ENCODE measurements at regions of chr6 and their contacts with region 1.

Region 1: DNA sequence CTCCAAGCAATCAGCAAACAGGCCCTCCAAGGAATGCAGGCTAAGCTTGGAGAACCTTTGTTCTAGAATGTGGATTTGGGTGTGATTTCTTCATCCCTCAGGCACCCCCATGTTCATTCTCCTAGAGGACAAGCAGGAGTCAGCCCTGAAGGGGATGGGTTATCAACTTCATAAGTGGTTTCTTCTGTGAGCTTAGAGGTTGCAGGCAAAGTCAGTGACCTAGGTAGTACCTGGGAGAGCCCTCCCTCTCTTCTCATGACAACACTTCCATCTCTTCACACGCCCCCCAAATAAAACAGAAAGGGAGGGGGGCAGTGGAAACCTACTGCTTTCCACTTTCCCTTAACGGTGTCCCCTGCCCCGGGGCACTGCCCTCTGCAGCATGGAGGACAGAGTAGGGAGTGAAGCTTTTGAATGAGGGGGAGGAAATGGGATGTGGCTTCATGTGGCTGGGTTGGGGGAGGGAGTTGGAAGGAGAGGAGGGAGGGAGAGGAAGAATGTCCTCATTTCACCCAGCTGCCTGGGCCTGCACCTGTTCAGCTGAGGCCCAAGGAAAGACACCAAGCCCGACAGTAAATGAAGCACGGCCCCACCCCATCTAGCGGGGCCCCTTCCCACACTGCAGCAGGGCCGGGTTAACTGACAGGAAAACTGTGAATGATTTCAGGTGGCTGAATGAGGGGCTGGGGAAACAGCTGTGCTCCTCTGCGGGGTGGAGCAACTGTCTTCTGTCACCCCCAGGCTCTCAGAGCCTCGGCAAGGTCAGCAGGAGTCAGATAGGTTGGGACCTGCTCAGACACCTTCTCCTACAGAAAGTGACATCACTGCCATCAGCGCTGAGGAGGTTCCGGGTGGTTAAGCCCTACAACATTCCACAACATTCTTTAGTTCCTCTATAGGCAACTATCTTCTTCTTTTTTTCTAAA is 40.1 kb upstream of the TAF8 start:
- DNase-seq: no peak
- ATAC-seq: peak; percentile 26
- H3K4me3 ChIP-seq: no peak overlapping the region
- H3K4me3 Mint-ChIP-seq: peak overlapping the region; percentile 45
- H3K27ac ChIP-seq: peak overlapping the region in 1 of 2 donors; percentile 71
- H3K27ac Mint-ChIP-seq: peak overlapping the region; percentile 84
- H3K4me1 ChIP-seq: peaks cover 40 to 50% of the 10 kb centered on the region in 2 donors
- H3K4me1 Mint-ChIP-seq: peaks cover 58% of the 10 kb centered on the region
- H3K27me3 ChIP-seq: no peaks in the 10 kb centered on the region
- H3K27me3 Mint-ChIP-seq: no peaks in the 10 kb centered on the region
- CTCF ChIP-seq: no peak

Region 2: GRCh38 chr6:42028234-42029061 is 18.2 kb after region 1 on chr6:
- CTCF ChIA-PET with region 1: interaction called, 4 read pairs
- POLR2A ChIA-PET with region 1: interaction called, 11 read pairs
- intact Hi-C with region 1: loop called (anchors 2 kb)
- DNase-seq: peak; percentile 29
- ATAC-seq: no peak
- H3K4me3 ChIP-seq: peak overlapping the region in 1 of 5 experiments; percentile 6
- H3K4me3 Mint-ChIP-seq: peak overlapping the region; percentile 69
- H3K27ac ChIP-seq: peak overlapping the region; percentile 57 to 93
- H3K27ac Mint-ChIP-seq: peak overlapping the region; percentile 95
- H3K4me1 ChIP-seq: peaks cover 75 to 95% of the 10 kb centered on the region in 2 donors
- H3K4me1 Mint-ChIP-seq: peaks cover 83% of the 10 kb centered on the region
- H3K27me3 ChIP-seq: no peaks in the 10 kb centered on the region
- H3K27me3 Mint-ChIP-seq: no peaks in the 10 kb centered on the region
- CTCF ChIP-seq: no peak

Region 3: DNA sequence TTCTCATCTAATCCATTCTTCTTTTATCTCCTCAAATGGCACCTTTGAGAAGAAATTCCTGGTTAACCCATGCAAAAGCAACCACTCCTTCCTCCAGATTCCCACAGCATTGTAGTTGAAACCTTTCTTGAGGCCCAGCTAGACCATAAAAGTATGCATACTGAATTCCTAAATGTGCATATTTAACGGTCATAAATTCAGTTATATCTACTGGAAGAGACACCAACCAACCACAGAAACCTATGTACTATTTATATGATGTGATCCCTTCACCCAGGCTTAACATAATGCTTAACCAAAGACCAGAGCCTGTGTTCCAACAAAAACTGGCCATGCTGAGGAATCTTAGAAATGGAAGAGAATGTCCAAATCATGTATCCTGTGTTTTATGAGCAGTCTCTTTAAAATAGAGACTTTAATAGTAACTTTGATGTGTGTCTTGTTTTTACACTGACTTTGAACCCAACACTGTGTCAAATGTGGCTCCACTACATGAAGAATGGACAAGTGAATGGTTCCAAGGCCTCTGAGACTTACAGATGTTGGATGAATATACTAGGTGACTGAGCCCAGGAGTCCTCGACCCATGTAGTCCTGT is 28.7 kb after region 1 on chr6:
- CTCF ChIA-PET with region 1: interaction called, 8 read pairs
- POLR2A ChIA-PET with region 1: interaction called, 3 read pairs
- intact Hi-C with region 1: loop called (anchors 1 kb)
- DNase-seq: no peak
- ATAC-seq: no peak
- H3K4me3 ChIP-seq: peak overlapping the region in 3 of 5 experiments; percentile 23 to 35 (median 30)
- H3K4me3 Mint-ChIP-seq: peak overlapping the region; percentile 74
- H3K27ac ChIP-seq: peak overlapping the region; percentile 22 to 79
- H3K27ac Mint-ChIP-seq: peak overlapping the region; percentile 92
- H3K4me1 ChIP-seq: peaks cover 37 to 48% of the 10 kb centered on the region in 2 donors
- H3K4me1 Mint-ChIP-seq: peaks cover 50% of the 10 kb centered on the region
- H3K27me3 ChIP-seq: no peaks in the 10 kb centered on the region
- H3K27me3 Mint-ChIP-seq: no peaks in the 10 kb centered on the region
- CTCF ChIP-seq: no peak